Activated naive CD4-positive, alpha-beta T cell treated with anti-CD3 and anti-CD28 coated beads for 36 hours (primary cell): ENCODE measurements at regions of chr20 and their contacts with region 1.

Region 1: DNA sequence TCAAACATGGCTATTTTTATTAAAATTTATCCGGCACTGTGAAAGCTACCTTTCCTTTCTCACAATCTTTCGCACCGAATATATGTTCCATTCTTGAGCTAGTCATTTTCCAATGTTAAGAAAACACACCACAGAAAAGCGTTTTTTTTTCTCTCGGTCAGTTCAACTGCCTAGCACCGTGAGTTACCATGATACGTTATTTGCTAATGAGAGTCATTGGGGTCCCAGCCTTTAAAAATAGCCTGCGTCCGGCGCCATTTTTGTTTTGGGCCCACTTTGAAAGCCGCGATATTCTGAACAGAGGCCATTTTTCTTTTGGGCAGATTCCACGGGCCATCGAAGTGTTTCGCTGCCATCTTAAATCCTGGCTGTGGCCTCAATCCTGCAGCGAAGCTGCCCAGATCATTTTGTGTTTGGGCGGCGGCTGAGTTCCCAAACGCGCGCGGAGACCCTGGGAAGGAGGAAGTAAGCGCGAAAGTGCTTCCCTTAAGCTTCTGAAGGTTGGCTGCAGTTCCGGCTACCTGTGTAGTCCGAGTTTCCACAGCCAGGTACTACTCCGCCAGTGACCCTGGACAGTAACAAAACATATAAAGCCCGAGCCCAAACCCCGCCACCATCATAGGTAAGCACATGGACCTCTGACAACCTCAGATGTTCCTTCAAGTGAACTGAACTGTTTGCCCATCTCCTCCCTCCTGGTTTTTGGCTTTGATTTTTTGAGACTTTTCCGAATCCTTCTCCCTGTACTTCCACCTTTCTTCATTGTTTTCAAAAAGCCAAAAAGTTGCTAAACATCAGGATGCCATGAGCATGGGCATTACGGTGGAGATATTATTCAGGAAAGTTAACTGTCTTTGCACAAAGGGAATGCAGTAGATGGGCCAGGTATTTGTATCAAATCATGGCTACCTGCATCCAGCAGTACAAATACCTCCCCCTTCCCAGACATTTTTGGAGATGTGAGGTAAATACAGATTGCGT is at the start of gene SLX4IP:
- DNase-seq: peak; percentile 91
- H3K4me3 Mint-ChIP-seq: peak within 1 kb of the TSS; percentile 95
- H3K27ac Mint-ChIP-seq: peak within 1 kb of the TSS; percentile 96
- H3K4me1 Mint-ChIP-seq: peaks cover 42% of the 10 kb centered on the region
- H3K27me3 Mint-ChIP-seq: no peaks in the 10 kb centered on the region
- total RNA-seq, gene SLX4IP: 4.9 to 5.2 TPM

Region 2: GRCh38 chr20:9989066-9989724 is 445.9 kb before region 1 on chr20:
- CTCF ChIA-PET with region 1: no interaction called
- intact Hi-C with region 1: no loop called
- DNase-seq: no peak
- H3K4me3 Mint-ChIP-seq: no peak overlapping the region
- H3K27ac Mint-ChIP-seq: no peak overlapping the region
- H3K4me1 Mint-ChIP-seq: no peaks in the 10 kb centered on the region
- H3K27me3 Mint-ChIP-seq: peaks cover 4% of the 10 kb centered on the region

Region 3: GRCh38 chr20:10219452-10219791 is 215.7 kb before region 1 on chr20:
- CTCF ChIA-PET with region 1: no interaction called
- intact Hi-C with region 1: loop called (anchors 2 kb)
- DNase-seq: peak; percentile 67
- H3K4me3 Mint-ChIP-seq: no peak overlapping the region
- H3K27ac Mint-ChIP-seq: no peak overlapping the region
- H3K4me1 Mint-ChIP-seq: peaks cover 13% of the 10 kb centered on the region
- H3K27me3 Mint-ChIP-seq: peaks cover 40% of the 10 kb centered on the region

Region 4: DNA sequence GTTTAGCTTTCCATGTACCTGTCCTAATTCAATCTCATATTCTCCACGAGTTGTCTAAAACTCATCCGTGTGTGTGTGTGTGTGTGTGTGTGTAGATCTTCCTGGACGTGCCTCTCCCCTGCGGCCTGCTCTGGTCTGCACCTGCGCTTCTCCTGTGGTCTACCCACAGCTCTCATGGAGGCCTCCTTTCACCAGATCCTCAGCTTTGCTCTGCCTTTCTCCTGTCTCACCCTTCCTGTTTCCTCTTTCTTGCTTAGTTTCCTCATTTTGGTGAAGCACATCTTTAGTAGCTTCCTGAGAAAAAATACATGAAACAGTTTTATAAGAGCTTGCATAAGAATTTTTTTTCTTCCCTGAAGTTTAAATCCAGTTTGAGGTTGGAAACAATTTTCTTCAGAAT is 18.1 kb after region 1 on chr20:
- CTCF ChIA-PET with region 1: interaction called, 7 read pairs
- intact Hi-C with region 1: loop called (anchors 2 kb)
- DNase-seq: peak; percentile 43
- H3K4me3 Mint-ChIP-seq: no peak overlapping the region
- H3K27ac Mint-ChIP-seq: peak overlapping the region; percentile 53
- H3K4me1 Mint-ChIP-seq: peaks cover 14% of the 10 kb centered on the region
- H3K27me3 Mint-ChIP-seq: no peaks in the 10 kb centered on the region

Region 5: DNA sequence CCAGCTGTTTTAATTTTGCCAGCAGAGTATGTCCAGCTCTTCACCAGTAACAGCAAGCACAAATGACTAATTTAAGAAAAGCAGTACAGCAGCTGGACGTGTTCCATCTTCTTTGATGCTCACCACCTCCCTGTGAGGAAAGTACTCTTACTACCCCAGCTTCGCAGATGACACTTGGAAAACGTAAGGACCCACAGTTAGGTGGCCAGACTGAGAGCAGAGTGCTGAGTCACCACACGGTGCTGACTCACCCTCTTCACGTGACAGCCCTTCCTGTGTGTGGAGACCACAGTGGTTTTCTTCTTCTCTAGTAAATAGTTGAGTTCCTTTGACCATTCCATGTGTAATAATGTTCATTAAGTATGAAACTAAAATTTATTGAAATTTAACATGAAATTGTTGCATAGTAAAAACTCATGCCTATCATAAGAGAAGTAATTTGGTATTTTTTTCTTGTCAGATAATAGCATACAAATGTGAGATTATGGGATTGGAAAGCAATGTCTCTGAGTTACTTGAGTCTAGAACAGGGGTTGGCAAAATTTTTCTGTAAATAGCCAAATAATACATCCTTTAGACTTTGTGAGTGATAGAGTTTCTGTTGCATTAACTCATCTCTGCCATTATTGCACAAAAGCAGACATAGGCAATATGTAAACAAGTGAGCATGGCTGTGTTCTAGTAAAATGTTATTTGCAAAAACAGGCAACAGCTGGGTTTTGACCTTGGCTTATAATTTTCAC is 76.6 kb after region 1 on chr20:
- CTCF ChIA-PET with region 1: no interaction called
- intact Hi-C with region 1: loop called (anchors 2 kb)
- DNase-seq: peak; percentile 77
- H3K4me3 Mint-ChIP-seq: no peak overlapping the region
- H3K27ac Mint-ChIP-seq: peak overlapping the region; percentile 56
- H3K4me1 Mint-ChIP-seq: peaks cover 25% of the 10 kb centered on the region
- H3K27me3 Mint-ChIP-seq: no peaks in the 10 kb centered on the region

Region 6: GRCh38 chr20:10597637-10598036 is 162.5 kb after region 1 on chr20:
- CTCF ChIA-PET with region 1: no interaction called
- intact Hi-C with region 1: loop called (anchors 2 kb)
- DNase-seq: no peak
- H3K4me3 Mint-ChIP-seq: no peak overlapping the region
- H3K27ac Mint-ChIP-seq: no peak overlapping the region
- H3K4me1 Mint-ChIP-seq: peaks cover 13% of the 10 kb centered on the region
- H3K27me3 Mint-ChIP-seq: no peaks in the 10 kb centered on the region

Region 7: GRCh38 chr20:11890331-11891080 is 1455.4 kb after region 1 on chr20:
- CTCF ChIA-PET with region 1: no interaction called
- intact Hi-C with region 1: loop called (anchors 5 kb)
- DNase-seq: peak; percentile 67
- H3K4me3 Mint-ChIP-seq: peak overlapping the region; percentile 73
- H3K27ac Mint-ChIP-seq: peak overlapping the region; percentile 50
- H3K4me1 Mint-ChIP-seq: peaks cover 21% of the 10 kb centered on the region
- H3K27me3 Mint-ChIP-seq: peaks cover 25% of the 10 kb centered on the region